SK-N-SH (cell line): ENCODE measurements at regions of chr10 and their contacts with region 1.

Region 1: GRCh38 chr10:125060826-125061556 is 99.4 kb downstream of the CTBP2 start:
- DNase-seq: peak; percentile 86
- H3K4me3 ChIP-seq: no peak overlapping the region
- H3K27ac ChIP-seq: peak overlapping the region; percentile 51 to 52; a peak in 3 of 4 replicates
- H3K4me1 ChIP-seq: peaks cover 48 to 62% of the 10 kb centered on the region in 2 experiments
- H3K27me3 ChIP-seq: no peaks in the 10 kb centered on the region
- CTCF ChIP-seq: peak; percentile 88
- EP300 ChIP-seq: no peak
- RAD21 ChIP-seq: peak; percentile 87

Region 2: GRCh38 chr10:124983255-124983705 is 77.7 kb before region 1 on chr10:
- CTCF ChIA-PET with region 1: interaction called, 12 read pairs
- POLR2A ChIA-PET with region 1: no interaction called
- DNase-seq: no peak
- H3K4me3 ChIP-seq: no peak overlapping the region
- H3K27ac ChIP-seq: no peak overlapping the region; a peak in 1 of 4 replicates
- H3K4me1 ChIP-seq: no peaks in the 10 kb centered on the region; a peak in 1 of 4 replicates
- H3K27me3 ChIP-seq: no peaks in the 10 kb centered on the region
- CTCF ChIP-seq: no peak
- EP300 ChIP-seq: no peak
- RAD21 ChIP-seq: no peak

Region 3: DNA sequence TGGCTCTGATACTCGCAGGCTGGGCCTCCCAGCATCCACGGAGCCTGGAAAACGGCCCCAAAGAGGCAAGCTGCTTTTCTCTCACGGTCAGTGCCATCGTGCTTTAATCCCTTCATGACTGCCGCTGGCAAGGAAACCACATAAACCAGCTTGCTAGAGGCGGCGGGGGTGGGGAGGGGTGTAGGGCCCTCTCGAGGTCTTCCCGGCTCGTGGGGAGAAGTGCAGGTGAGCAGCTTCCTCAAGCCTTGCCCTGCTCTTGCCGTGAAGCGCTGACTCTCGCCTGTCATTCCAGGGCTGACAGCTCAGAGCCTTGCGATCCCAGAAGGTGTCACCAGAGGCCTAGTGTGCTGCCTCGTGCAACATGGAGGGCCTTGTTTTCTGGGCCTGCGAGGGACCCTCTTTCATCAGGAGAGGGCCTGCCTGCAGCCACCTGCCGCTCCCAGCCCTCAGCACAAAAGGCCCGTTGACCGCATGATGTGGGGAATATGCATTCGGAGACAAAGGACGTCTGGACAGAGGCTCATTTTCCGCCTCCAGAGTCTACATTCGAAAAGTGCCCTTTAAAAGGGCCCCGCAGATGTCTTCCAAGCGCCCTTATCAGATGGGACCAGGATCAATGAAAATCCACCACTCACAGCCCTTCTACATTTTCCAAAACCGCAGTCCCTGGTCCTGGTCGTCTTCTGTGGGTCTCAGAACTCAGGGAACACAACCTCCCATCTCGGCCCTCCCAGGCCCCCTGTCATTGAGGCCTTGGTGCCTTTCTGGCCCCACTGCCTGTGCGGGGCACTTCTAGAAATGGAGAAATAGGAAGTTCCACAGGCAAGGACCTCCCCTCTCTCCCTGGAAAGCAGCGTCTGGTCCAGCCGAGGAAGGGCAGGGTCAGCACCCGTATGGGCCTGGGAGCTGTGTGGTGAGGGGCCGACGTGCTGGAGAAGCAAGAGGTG is 60.4 kb before region 1 on chr10:
- CTCF ChIA-PET with region 1: interaction called, 88 read pairs
- POLR2A ChIA-PET with region 1: no interaction called
- DNase-seq: peak; percentile 83
- H3K4me3 ChIP-seq: no peak overlapping the region
- H3K27ac ChIP-seq: peak overlapping the region; percentile 9 to 94; a peak in 3 of 4 replicates
- H3K4me1 ChIP-seq: peaks cover 0 to 73% of the 10 kb centered on the region in 2 experiments; a peak in 1 of 4 replicates
- H3K27me3 ChIP-seq: no peaks in the 10 kb centered on the region
- CTCF ChIP-seq: no peak
- EP300 ChIP-seq: peak in 1 of 2 experiments; percentile 19; a peak in 1 of 4 replicates
- RAD21 ChIP-seq: peak; percentile 56

Region 4: GRCh38 chr10:125023255-125023654 is 37.7 kb before region 1 on chr10:
- CTCF ChIA-PET with region 1: interaction called, 12 read pairs
- POLR2A ChIA-PET with region 1: interaction called, 4 read pairs
- DNase-seq: peak; percentile 90
- H3K4me3 ChIP-seq: peak overlapping the region in 1 of 2 experiments; percentile 18; a peak in 1 of 4 replicates
- H3K27ac ChIP-seq: peak overlapping the region; percentile 67 to 100; a peak in 3 of 4 replicates
- H3K4me1 ChIP-seq: peaks cover 32 to 80% of the 10 kb centered on the region in 2 experiments
- H3K27me3 ChIP-seq: no peaks in the 10 kb centered on the region
- CTCF ChIP-seq: no peak
- EP300 ChIP-seq: peak in 1 of 2 experiments; percentile 72; a peak in 2 of 4 replicates
- RAD21 ChIP-seq: 0 out of 2 replicates have a peak, but pooled peaks have one; percentile 9

Region 5: DNA sequence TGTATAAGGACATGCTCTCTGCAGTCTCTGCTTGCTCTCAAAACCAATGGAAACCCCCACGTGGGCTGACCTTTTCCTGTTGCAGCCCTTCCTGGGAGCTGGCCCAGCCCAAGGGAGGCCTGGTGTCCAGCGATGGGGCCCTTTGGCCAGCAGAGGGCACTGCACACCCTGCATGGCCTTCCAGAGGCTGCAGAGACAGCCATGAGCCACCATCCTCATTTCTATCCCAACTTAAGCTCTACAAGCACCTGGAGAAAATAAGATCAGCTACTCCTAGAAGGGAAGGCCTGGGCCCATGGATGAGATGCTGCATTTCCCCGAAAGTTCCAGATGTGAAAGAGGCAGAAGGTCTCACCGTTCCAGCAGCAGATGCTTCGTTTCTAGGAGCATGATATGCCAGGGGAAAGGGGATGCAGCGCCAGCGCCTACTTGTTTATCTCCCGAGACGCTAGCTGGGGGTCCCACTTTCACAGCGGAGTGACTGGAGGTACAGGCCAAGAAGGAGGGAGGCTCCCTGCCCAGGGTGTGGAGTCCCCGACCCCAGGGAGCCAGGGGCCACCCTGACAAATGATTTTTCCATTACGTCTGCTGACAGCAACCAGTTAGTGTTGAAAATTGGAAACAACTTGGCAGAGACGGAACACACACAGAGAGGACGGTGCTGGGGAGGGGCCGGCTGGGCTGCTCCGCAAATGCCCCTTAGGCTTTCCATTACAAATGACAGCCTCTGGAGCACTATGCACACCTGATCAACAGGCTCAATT is 12.7 kb before region 1 on chr10:
- CTCF ChIA-PET with region 1: interaction called, 211 read pairs
- POLR2A ChIA-PET with region 1: no interaction called
- DNase-seq: peak; percentile 88
- H3K4me3 ChIP-seq: peak overlapping the region in 1 of 2 experiments; percentile 38; a peak in 1 of 4 replicates
- H3K27ac ChIP-seq: peak overlapping the region in 1 of 2 experiments; percentile 80; a peak in 2 of 4 replicates
- H3K4me1 ChIP-seq: peaks cover 24 to 47% of the 10 kb centered on the region in 2 experiments; a peak in 2 of 4 replicates
- H3K27me3 ChIP-seq: no peaks in the 10 kb centered on the region
- CTCF ChIP-seq: peak; percentile 97
- EP300 ChIP-seq: no peak
- RAD21 ChIP-seq: peak; percentile 86

Region 6: DNA sequence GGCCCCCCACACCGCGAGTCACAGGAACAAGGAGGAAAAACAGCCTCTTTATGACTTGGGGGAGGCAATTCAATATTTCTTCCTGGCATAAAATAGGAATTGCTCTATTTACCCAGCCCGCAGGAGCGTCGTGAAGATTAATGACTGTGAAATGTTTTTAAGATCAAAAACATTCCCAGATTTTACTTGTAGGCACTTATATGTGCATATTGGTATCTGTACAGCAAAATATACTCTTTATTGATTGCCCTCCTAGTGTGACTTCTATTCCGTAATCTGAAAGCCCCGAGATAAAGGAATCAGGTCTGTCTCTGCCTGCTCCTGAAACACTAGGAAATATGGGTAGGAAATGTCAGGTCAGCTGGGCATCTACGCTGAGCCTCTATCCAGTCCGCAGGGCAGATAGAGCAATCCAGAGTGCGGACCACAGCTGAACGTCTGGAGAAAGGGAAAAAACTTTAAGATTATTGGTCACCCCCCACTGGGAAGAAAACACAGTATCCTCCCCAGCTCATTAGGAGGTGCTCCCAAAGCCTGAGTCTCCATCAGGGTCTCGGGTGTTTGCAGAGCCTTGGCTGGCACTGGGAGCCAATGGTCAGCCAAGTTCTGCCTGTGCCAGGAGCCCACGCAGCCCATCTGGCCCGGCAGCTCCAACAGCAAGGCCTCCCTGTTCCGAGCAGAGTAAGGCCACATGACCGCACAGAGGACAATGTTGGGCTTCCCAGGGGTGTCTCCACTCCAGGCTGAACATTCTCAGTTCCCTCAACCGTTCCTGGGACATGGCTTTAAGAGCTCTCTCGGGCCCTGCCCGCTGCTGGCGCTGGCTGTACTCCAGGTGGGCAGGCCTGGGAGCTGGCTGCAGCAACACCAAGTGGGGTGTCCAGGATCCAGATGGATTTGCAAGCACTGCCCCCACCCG is 91.7 kb after region 1 on chr10:
- CTCF ChIA-PET with region 1: interaction called, 10 read pairs
- POLR2A ChIA-PET with region 1: no interaction called
- DNase-seq: no peak
- H3K4me3 ChIP-seq: no peak overlapping the region
- H3K27ac ChIP-seq: peak overlapping the region in 1 of 2 experiments; percentile 43; a peak in 1 of 4 replicates
- H3K4me1 ChIP-seq: peaks cover 44 to 60% of the 10 kb centered on the region in 2 experiments
- H3K27me3 ChIP-seq: no peaks in the 10 kb centered on the region
- CTCF ChIP-seq: no peak
- EP300 ChIP-seq: no peak
- RAD21 ChIP-seq: no peak

Region 7: GRCh38 chr10:125355657-125356056 is 294.7 kb after region 1 on chr10:
- CTCF ChIA-PET with region 1: no interaction called
- POLR2A ChIA-PET with region 1: no interaction called
- DNase-seq: no peak
- H3K4me3 ChIP-seq: no peak overlapping the region
- H3K27ac ChIP-seq: no peak overlapping the region
- H3K4me1 ChIP-seq: no peaks in the 10 kb centered on the region
- H3K27me3 ChIP-seq: no peaks in the 10 kb centered on the region
- CTCF ChIP-seq: no peak
- EP300 ChIP-seq: no peak
- RAD21 ChIP-seq: no peak